Mucosa of descending colon (tissue), 3 donors: ENCODE measurements at regions of chr6 and their contacts with region 1.

Region 1: GRCh38 chr6:154749341-154749740 is 16.1 kb downstream of the SCAF8 start:
- DNase-seq: no peak
- ATAC-seq: peak; percentile 50
- H3K4me3 ChIP-seq: no peak overlapping the region
- H3K4me1 ChIP-seq: peaks cover 5% of the 10 kb centered on the region
- CTCF ChIP-seq: no peak

Region 2: GRCh38 chr6:154791556-154792317 is 42.4 kb after region 1 on chr6:
- intact Hi-C with region 1: loop called in 1 of 2 experiments (anchors 10 kb)
- DNase-seq: no peak
- ATAC-seq: no peak
- H3K4me3 ChIP-seq: no peak overlapping the region
- H3K4me1 ChIP-seq: no peaks in the 10 kb centered on the region
- CTCF ChIP-seq: no peak